CD14-positive monocyte (primary cell): ENCODE measurements at regions of chr9 and their contacts with region 1.

Region 1: DNA sequence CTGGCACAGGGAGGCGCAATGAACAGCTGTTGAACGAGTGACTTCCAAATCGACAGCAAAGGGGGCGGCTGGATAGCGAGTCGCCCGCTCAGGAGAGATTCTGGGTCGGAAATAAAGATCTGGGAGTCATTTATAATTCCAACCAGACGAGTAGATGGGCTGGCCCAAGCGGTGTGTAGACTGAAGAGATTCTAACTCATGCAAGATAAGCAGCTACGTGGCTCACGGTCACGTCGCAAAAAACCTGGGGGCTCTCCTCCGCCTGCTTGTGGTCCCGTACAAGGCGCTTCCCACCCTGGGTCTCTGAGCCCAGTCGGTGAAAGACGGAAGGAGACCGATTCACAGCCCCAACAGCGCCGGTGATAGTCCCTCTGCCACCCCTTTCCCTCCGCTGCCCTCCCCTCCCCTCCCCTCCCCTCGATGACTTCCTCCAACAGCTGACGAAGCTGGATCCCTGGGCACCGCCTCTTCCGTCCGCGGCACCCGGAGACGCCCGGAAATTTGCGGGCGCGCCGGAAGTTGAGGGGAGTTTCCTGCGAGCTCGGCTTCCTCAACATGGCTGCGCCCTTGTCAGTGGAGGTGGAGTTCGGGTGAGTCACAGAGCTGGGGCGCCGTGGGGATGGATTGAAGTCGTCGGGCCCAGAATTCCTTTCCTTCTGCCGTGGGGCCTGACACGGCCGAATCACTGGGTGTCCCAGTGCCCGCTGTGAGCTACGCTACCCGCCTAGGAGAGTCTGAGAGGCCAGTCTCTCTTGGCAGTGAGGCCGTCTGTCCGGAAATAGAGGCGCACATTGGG is at the start of gene URM1:
- DNase-seq: peak; percentile 96 to 99 (median 99)
- H3K4me3 ChIP-seq: peak within 1 kb of the TSS; percentile 75 to 94 (median 93)
- H3K4me3 Mint-ChIP-seq: peak within 1 kb of the TSS; percentile 89 to 96
- H3K27ac ChIP-seq: peak within 1 kb of the TSS; percentile 83 to 99
- H3K27ac Mint-ChIP-seq: peak within 1 kb of the TSS; percentile 96 to 99 (median 98)
- H3K4me1 ChIP-seq: peaks cover 20 to 22% of the 10 kb centered on the region in 2 donors
- H3K4me1 Mint-ChIP-seq: peaks cover 30% of the 10 kb centered on the region
- H3K27me3 ChIP-seq: no peaks in the 10 kb centered on the region
- H3K27me3 Mint-ChIP-seq: peaks cover 0 to 3% (median 0%) of the 10 kb centered on the region in 3 donors
- CTCF ChIP-seq: no peak
- polyA plus RNA-seq, gene URM1: 37.5 to 39.7 (median 38.3) TPM

Region 2: GRCh38 chr9:128275996-128276573 is 94.9 kb before region 1 on chr9 and contains the starts of genes GOLGA2 and SWI5:
- intact Hi-C with region 1: loop called in 1 of 2 experiments (anchors 5 kb)
- DNase-seq: peak; percentile 99 to 100 (median 100)
- H3K4me3 ChIP-seq: peak within 1 kb of the TSS; percentile 61 to 90 (median 88)
- H3K4me3 Mint-ChIP-seq: peak within 1 kb of the TSS; percentile 94 to 97
- H3K27ac ChIP-seq: peak within 1 kb of the TSS; percentile 47 to 91
- H3K27ac Mint-ChIP-seq: peak within 1 kb of the TSS; percentile 91 to 98 (median 94)
- H3K4me1 ChIP-seq: peaks cover 24 to 28% of the 10 kb centered on the region in 2 donors
- H3K4me1 Mint-ChIP-seq: peaks cover 34% of the 10 kb centered on the region
- H3K27me3 ChIP-seq: no peaks in the 10 kb centered on the region
- H3K27me3 Mint-ChIP-seq: peaks cover 0 to 6% (median 0%) of the 10 kb centered on the region in 3 donors
- CTCF ChIP-seq: no peak
- polyA plus RNA-seq, gene GOLGA2: 2.9 to 34.2 (median 4.6) TPM
- polyA plus RNA-seq, gene SWI5: 14.4 to 18.0 (median 16.2) TPM

Region 3: DNA sequence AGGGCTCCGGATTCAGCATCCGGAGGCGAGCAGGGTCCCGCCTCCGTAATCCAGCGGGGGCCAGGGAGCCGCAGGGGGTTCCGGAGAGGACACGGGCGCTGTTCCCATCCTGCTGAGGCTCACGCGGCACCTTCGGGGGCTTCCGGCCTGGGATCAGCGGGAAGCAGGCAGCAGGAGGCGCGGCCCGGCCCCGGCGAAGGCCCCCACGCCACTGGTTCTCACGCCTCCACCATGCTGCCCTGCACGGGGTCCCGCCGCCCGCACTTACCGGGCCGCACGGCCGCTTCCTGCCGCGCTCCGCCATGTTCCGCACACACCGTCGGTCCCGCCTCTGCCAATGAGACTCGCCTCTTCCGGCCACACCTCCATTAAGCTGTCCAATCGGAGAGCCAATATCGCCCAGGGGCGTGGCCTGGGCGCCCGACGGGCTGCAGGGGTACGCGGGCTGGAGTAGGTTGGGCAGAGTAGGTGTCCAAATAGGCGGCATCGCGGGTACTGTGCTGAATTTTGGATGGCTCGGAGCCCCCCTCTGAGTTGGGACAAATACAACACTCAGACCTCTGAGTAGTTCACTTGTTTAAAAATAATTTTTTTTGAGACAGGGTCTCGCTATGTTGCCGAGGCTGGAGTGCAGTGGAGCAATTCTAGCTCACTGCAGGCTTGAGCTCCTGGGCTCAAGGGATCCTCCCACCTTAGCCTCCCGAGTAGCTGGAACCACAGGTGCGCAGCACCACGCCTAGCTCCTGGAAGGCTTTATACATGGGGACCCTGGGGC is 458.6 kb after region 1 on chr9 and contains the start of gene SPOUT1:
- intact Hi-C with region 1: no loop called
- DNase-seq: peak; percentile 88 to 91 (median 88)
- H3K4me3 ChIP-seq: peak within 1 kb of the TSS; percentile 81 to 97 (median 82)
- H3K4me3 Mint-ChIP-seq: peak within 1 kb of the TSS; percentile 84 to 91
- H3K27ac ChIP-seq: peak within 1 kb of the TSS in 1 of 2 donors; percentile 82
- H3K27ac Mint-ChIP-seq: peak within 1 kb of the TSS; percentile 10 to 93 (median 83)
- H3K4me1 ChIP-seq: peaks cover 15 to 22% of the 10 kb centered on the region in 2 donors
- H3K4me1 Mint-ChIP-seq: peaks cover 15% of the 10 kb centered on the region
- H3K27me3 ChIP-seq: no peaks in the 10 kb centered on the region
- H3K27me3 Mint-ChIP-seq: peaks cover 0 to 4% (median 0%) of the 10 kb centered on the region in 3 donors
- CTCF ChIP-seq: no peak
- polyA plus RNA-seq, gene SPOUT1: 25.7 to 29.9 (median 29.3) TPM